ENCODE measurements at regions of chr10 and their contacts with region 1.

Region 1: DNA sequence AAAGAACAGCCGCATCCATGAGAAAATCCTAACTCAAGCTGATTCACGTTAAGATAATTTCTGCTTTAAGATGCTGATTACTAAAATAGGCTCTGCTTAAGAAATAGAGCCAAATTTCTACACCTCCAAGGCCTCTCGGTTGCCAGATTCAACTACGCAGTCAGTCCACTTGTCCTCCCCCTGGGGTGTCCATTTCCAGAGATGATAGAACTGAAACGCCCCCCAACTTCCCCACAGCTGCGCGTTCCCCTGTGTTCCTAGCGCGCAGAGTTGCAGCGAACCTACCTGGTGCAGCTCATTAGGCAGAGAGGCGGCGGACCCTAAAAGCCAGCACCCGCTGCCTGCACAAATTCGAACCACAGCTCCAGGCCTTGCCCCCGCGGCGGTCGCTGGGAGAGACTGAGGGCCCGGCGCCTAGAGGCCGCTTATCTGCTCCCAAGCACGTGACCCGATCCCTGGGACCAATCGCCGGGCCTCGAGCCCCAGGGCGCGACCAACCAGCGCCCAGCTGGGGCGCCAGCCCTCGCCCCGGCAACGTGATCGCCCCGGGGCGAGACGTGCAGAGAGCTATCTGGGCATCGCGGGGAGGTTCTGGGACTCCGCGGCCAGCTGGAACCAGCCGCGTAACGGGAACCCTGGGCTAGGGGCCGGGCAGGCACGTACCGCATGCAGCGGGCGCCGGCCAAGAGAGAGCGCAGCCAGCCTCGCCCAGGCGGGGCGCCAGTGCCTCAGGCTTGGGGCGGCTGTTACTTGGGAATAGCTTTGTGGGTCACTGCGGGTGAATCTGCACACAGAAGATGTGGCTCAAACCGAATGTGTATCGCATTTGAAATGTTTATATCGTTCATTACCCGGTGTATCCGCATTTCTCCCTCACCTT is at the start of gene PPP1R3C:
- DNase-seq: peak; percentile 92 to 98
- H3K4me3 ChIP-seq: peak within 1 kb of the TSS; percentile 65 to 75
- H3K27ac ChIP-seq: peak within 1 kb of the TSS; percentile 78 to 88
- H3K4me1 ChIP-seq: peaks cover 0 to 40% (median 16%) of the 10 kb centered on the region in 4 donors
- H3K27me3 ChIP-seq: no peaks in the 10 kb centered on the region
- CTCF ChIP-seq: peak in 1 of 2 experiments; percentile 36

Region 2: GRCh38 chr10:90674928-90675327 is 958.0 kb before region 1 on chr10:
- intact Hi-C with region 1: no loop called
- DNase-seq: peak; percentile 33 to 66
- H3K4me3 ChIP-seq: no peak overlapping the region
- H3K27ac ChIP-seq: peak overlapping the region; percentile 34 to 47
- H3K4me1 ChIP-seq: peaks cover 0 to 21% (median 0%) of the 10 kb centered on the region in 4 donors
- H3K27me3 ChIP-seq: no peaks in the 10 kb centered on the region
- CTCF ChIP-seq: no peak

Region 3: GRCh38 chr10:91298224-91298871 is 334.6 kb before region 1 on chr10:
- intact Hi-C with region 1: loop called (anchors 5 kb)
- DNase-seq: peak; percentile 64 to 86
- H3K4me3 ChIP-seq: peak overlapping the region; percentile 40 to 60
- H3K27ac ChIP-seq: peak overlapping the region; percentile 41 to 46
- H3K4me1 ChIP-seq: peaks cover 0 to 7% (median 5%) of the 10 kb centered on the region in 4 donors
- H3K27me3 ChIP-seq: no peaks in the 10 kb centered on the region
- CTCF ChIP-seq: peak; percentile 96 to 97

Region 4: GRCh38 chr10:91409869-91410637 is 222.9 kb before region 1 on chr10 and contains the start of gene HECTD2:
- intact Hi-C with region 1: loop called (anchors 5 kb)
- DNase-seq: peak; percentile 70 to 86
- H3K4me3 ChIP-seq: peak within 1 kb of the TSS; percentile 90 to 97
- H3K27ac ChIP-seq: peak within 1 kb of the TSS; percentile 100
- H3K4me1 ChIP-seq: peaks cover 0 to 37% (median 6%) of the 10 kb centered on the region in 4 donors
- H3K27me3 ChIP-seq: no peaks in the 10 kb centered on the region
- CTCF ChIP-seq: peak; percentile 38 to 77

Region 5: GRCh38 chr10:91493313-91493712 is 139.6 kb before region 1 on chr10:
- intact Hi-C with region 1: loop called (anchors 2 kb)
- DNase-seq: no peak
- H3K4me3 ChIP-seq: no peak overlapping the region
- H3K27ac ChIP-seq: no peak overlapping the region
- H3K4me1 ChIP-seq: peaks cover 0 to 13% (median 0%) of the 10 kb centered on the region in 4 donors
- H3K27me3 ChIP-seq: no peaks in the 10 kb centered on the region
- CTCF ChIP-seq: peak; percentile 47 to 72

Region 6: DNA sequence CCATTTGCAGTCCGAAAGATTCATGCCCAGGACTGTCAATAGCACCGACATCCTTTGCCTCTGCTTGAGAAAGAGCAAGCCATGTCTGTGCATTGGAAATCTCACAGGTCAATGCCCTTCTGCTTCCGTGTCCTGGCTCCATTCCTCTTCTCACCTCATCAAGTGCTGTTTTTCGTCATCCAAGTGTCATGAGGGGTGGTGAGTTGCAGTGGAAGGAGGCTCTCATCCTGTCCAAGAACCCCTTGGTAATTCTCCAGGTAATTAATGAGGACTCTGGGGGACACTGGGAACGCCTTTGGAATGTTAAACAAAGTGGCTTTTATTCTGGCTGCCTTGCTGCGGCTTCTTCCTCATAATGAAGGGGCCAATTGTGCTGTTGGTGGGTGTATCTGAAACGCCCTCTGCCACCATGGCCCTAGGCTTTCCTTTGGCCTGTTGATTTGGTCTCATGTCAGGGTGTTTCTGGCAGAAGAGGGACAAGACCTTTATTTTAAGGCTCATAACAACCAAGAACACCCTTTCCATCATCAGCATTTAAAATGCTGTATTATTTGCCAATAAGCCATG is 57.8 kb before region 1 on chr10:
- intact Hi-C with region 1: no loop called
- DNase-seq: no peak
- H3K4me3 ChIP-seq: no peak overlapping the region
- H3K27ac ChIP-seq: peak overlapping the region in 1 of 2 donors; percentile 23
- H3K4me1 ChIP-seq: peaks cover 0 to 37% (median 22%) of the 10 kb centered on the region in 4 donors
- H3K27me3 ChIP-seq: no peaks in the 10 kb centered on the region
- CTCF ChIP-seq: no peak

Region 7: GRCh38 chr10:91694170-91694794 is 61.4 kb after region 1 on chr10:
- intact Hi-C with region 1: loop called (anchors 5 kb)
- DNase-seq: no peak
- H3K4me3 ChIP-seq: no peak overlapping the region
- H3K27ac ChIP-seq: no peak overlapping the region
- H3K4me1 ChIP-seq: peaks cover 3 to 16% (median 11%) of the 10 kb centered on the region in 4 donors
- H3K27me3 ChIP-seq: no peaks in the 10 kb centered on the region
- CTCF ChIP-seq: peak; percentile 61 to 66

Region 8: DNA sequence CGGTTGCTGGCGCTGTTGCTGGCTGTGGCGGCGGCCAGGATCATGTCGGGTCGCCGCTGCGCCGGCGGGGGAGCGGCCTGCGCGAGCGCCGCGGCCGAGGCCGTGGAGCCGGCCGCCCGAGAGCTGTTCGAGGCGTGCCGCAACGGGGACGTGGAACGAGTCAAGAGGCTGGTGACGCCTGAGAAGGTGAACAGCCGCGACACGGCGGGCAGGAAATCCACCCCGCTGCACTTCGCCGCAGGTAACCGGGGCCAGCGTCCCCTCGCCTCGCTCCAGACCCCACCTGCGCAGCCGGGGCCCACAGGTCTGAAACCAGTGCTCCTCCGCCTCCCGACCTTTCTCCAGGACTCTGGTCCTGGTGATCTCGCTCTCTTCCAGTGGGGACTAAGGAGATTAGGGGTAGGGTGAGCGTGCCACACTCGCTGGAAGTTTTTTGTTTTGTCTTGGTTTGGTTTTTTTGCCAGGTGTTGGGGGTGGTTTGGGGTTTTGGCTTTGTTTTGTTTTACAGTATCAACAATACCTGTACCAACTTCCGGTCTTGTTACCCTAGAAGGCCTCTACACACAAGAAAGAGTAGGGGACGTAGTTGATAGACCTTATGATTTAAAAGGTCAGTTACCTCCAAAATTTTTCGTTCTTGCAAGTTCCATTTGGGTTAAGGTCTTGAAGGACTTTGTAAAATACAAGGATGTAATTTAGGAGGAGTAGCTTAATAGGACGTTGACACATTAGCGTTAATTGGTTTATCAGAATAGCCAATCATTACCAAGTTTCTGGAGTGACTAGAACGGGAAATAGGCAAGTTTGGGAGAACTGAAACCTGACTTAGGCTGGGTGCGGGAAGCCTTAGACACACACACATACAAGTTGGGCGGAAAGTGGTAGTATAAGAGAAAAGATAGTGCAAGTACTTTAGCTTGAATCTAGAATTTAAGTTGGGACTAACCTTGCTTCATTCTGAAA is 166.0 kb after region 1 on chr10:
- intact Hi-C with region 1: no loop called
- DNase-seq: peak; percentile 28 to 70
- H3K4me3 ChIP-seq: peak overlapping the region; percentile 90 to 93
- H3K27ac ChIP-seq: peak overlapping the region; percentile 92 to 99
- H3K4me1 ChIP-seq: peaks cover 0 to 44% (median 31%) of the 10 kb centered on the region in 4 donors
- H3K27me3 ChIP-seq: no peaks in the 10 kb centered on the region
- CTCF ChIP-seq: no peak

Measured in tibial artery (tissue), 4 donors.